OCI-LY7 (cell line): ENCODE measurements at regions of chr13 and their contacts with region 1.

Region 1: DNA sequence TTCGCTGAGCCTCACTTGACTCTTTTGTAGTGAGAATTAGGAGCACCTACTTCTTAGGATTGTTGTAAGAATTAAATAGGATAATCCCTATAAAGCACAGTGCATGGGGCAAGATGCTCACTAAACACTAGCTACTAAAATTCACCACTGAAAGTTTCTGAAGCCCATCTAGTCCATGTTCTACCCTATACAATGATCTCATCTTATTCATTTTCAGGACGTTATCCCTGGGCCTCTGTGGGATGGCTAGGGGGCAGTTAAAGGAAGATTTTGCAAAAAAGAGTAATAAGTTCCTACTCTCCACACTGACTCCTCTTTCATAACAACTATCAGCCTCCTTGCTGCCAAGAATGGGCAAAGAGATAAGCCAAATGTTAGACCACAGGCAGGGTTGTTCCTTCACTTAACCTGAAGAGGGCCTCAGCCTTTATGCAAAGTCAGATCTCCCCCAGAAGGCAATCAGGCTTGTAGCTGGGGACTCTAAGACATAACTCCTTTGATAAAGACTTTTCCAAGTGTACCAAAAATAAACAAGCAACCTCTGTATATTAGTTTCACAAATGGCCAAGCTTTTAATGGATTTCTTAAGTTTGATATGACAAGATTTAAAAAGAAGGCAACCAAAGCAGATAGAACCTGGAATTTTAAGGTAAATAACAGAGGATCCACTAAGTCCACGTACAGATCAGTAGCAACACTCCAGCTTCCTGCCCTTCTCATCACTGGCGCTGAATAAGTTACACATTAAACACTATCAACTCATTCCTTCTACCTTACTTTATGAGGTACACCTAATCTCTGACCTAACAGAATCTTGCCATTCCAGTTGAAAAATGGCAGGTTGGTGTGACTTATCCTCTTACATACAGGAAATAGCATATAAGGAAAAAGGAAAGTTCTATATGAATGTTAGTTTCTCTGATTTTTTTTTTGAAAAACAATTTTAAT is 44.4 kb downstream of the ELF1 start:
- DNase-seq: peak; percentile 78
- H3K4me3 ChIP-seq: peak overlapping the region; percentile 85
- H3K27ac ChIP-seq: peak overlapping the region; percentile 64
- H3K4me1 ChIP-seq: peaks cover 82% of the 10 kb centered on the region
- CTCF ChIP-seq: peak; percentile 86

Region 2: DNA sequence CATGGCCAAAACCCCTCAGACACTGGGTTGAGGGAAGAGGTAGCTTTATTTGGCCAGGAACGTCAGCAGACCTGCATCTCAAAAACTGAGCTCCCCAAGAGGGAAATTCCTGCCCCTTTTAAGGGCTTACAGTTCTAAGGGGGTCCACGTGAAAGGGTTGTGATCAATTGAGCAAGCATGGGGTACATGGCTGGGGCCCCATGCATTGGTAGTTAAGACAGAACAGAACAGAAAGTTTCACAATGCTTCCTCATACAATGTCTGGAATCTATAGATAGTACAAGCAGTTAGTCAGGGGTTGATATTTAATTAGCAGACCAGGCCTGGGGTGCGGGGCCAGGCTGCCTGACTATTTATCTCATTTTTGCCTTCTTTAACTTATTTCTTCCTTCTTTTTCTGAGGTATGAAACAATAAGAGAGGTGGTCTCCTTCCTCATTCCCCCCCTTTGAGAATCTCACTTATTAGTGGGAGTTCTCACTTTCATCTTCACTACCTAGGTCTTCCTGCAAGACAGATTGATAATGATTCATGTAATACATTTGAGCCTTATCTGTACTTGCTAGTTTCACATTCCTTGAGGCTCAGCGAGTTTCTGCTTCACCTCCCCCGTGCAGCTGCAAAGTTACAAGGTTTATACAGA is 100.5 kb before region 1 on chr13:
- CTCF ChIA-PET with region 1: no interaction called
- POLR2A ChIA-PET with region 1: no interaction called
- intact Hi-C with region 1: no loop called
- DNase-seq: peak; percentile 13
- H3K4me3 ChIP-seq: no peak overlapping the region
- H3K27ac ChIP-seq: no peak overlapping the region
- H3K4me1 ChIP-seq: no peaks in the 10 kb centered on the region
- CTCF ChIP-seq: no peak

Region 3: DNA sequence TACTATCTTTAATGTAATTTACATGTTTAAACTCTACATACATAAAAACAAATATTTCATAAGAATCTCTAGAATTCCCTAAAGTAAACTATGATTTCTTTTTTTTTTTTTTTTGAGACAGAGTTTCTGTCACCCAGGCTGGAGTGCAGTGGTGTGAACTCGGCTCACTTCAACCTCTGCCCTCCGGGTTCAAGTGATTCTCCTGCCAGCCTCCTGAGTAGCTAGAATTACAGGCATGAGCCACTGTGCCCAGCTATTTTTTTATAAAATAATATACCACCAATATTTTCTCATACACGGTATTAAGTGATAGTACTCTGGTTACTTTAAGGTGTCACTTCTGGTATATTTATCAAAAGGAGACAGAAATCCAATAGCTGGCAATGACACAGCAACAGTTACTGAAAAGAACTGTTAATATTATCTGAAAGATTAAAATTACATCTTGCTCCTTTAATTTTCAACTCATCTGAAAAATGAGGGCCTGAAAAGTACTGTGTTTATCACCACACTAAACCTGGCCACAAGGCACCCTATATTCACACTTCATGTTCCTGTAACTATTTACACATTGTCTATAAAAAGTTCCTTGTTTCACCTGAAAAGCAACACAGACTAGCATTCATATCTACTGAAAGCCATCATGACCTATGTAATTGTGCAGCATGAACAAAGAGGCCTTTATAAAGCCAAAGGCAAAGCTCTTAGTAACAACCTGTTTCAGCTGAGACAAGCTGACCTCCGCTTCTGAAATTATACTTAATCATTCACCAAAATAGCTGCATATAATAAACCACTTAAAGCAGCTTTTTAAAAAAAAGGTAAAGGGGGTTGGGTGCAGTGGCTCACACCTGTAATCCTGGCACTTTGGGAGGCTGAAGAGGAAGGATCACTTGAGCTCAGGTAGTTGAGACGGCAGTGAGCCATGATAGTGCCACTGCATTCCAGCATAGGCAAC is 79.2 kb before region 1 on chr13:
- CTCF ChIA-PET with region 1: no interaction called
- POLR2A ChIA-PET with region 1: no interaction called
- intact Hi-C with region 1: no loop called
- DNase-seq: no peak
- H3K4me3 ChIP-seq: no peak overlapping the region
- H3K27ac ChIP-seq: no peak overlapping the region
- H3K4me1 ChIP-seq: peaks cover 10% of the 10 kb centered on the region
- CTCF ChIP-seq: no peak

Region 4: DNA sequence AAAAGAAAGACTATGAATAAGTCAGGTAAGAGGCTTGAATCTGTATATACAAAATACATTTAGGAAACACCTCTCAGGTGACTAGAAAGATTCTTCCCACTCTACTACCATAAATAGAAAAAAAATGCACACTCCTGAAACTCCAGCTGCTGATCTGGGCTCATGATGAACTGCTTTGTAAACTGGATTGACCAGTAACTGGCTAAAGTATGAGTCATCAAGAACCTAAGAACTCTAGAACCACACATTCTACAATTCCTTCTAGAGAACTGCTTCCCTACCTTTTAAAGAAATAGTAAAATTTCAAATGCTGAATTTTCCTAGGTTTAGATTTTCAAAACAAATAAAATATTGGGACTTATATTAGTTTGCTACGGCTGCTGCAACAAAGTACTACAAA is 10.8 kb before region 1 on chr13:
- CTCF ChIA-PET with region 1: interaction called, 4 read pairs
- POLR2A ChIA-PET with region 1: interaction called, 10 read pairs
- intact Hi-C with region 1: no loop called
- DNase-seq: no peak
- H3K4me3 ChIP-seq: no peak overlapping the region
- H3K27ac ChIP-seq: peak overlapping the region; percentile 24
- H3K4me1 ChIP-seq: peaks cover 85% of the 10 kb centered on the region
- CTCF ChIP-seq: no peak

Region 5: GRCh38 chr13:41004875-41005693 is 30.4 kb after region 1 on chr13:
- CTCF ChIA-PET with region 1: no interaction called
- POLR2A ChIA-PET with region 1: interaction called, 19 read pairs
- intact Hi-C with region 1: no loop called
- DNase-seq: peak; percentile 89
- H3K4me3 ChIP-seq: peak overlapping the region; percentile 64
- H3K27ac ChIP-seq: peak overlapping the region; percentile 99
- H3K4me1 ChIP-seq: peaks cover 95% of the 10 kb centered on the region
- CTCF ChIP-seq: no peak

Region 6: DNA sequence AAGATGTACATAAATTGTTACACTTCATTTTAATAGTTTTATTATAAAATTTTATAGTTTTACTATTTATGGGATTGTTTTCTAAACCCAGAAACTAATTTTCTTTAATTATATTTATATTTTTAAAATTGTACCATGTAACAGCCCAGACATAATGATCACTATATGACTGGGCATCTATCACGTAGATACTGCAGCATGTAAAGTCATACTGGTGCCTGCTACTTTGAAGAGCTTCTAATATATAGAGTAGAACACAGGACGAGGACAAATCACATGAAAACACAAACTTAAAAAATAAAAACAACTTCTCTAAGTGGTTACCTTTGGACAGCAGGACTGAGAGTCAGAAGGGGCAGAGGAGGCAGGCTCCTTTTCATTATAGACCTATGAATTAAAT is 39.1 kb after region 1 on chr13:
- CTCF ChIA-PET with region 1: interaction called, 3 read pairs
- POLR2A ChIA-PET with region 1: interaction called, 86 read pairs
- intact Hi-C with region 1: no loop called
- DNase-seq: no peak
- H3K4me3 ChIP-seq: peak overlapping the region; percentile 84
- H3K27ac ChIP-seq: peak overlapping the region; percentile 94
- H3K4me1 ChIP-seq: peaks cover 53% of the 10 kb centered on the region
- CTCF ChIP-seq: no peak

Region 7: DNA sequence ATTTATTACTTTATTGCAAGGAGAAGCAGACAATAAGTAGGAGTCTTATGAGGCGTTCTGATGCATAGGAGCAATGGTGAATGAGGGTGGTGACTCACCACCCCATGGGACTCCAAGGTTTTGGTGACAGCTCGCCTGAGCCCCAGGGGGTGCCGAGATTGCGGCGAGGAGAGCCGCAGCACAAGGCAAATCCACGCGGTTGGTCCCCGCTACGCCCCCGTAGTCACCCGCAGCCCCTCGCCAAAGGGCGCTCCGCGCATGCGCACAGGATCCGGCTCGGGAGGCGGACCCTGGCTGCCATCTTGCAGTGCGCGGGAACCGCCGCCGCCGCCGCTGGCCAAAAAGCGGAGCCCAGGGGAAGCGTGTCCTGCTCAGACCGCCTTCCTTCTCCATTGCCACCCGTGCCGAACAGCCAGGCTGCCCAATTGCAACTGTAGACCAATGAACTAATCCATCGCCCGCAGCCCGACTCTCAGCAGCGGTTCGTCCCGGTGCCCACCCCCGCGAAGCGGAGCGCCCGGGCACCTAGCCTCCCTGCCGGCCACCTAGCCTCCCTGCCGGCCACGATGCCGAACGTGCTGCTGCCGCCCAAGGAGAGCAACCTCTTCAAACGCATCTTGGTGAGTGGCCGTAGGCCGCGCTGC is 336.4 kb after region 1 on chr13 and contains the start of gene NAA16:
- CTCF ChIA-PET with region 1: no interaction called
- POLR2A ChIA-PET with region 1: no interaction called
- intact Hi-C with region 1: loop called (anchors 10 kb)
- DNase-seq: peak; percentile 93
- H3K4me3 ChIP-seq: peak within 1 kb of the TSS; percentile 79
- H3K27ac ChIP-seq: peak within 1 kb of the TSS; percentile 74
- H3K4me1 ChIP-seq: peaks cover 37% of the 10 kb centered on the region
- CTCF ChIP-seq: 0 out of 2 replicates have a peak, but pooled peaks have one; percentile 1
- total RNA-seq, gene NAA16: 22.1 and 22.4 TPM in 2 replicates